Heart left ventricle (tissue), 16 donors: ENCODE measurements at regions of chr4 and their contacts with region 1.

Region 1: DNA sequence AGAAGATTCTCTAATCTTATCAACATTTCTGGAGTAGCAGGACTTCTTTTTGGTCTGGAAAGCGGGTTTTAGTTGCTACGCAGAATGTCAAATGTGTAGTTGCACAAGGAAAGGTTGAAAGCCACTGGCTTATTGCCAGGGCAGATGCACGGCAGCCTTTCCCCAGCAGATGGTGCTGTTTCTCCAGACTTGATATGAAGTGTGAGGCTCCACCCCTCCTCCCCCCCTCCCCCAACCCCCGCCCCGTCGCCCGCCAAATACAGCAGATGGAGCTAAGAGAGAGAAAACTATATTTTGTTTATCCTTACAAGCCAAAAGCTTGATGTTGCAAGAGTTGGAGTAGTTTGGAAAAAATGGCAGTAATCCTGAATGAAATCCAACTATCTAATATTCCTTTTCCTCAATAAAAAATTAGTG is 32.0 kb downstream of the ENOPH1 start:
- DNase-seq: peak; percentile 76 to 85 (median 80)
- ATAC-seq: peak; percentile 57 to 90 (median 86)
- H3K4me3 ChIP-seq: no peak overlapping the region
- H3K27ac ChIP-seq: peak overlapping the region in 1 of 12 donors; percentile 10
- H3K4me1 ChIP-seq: peaks cover 0 to 9% (median 1%) of the 10 kb centered on the region in 12 donors
- H3K27me3 ChIP-seq: no peaks in the 10 kb centered on the region
- CTCF ChIP-seq: peak; percentile 72 to 97 (median 89)
- POLR2A ChIP-seq: no peak

Region 2: DNA sequence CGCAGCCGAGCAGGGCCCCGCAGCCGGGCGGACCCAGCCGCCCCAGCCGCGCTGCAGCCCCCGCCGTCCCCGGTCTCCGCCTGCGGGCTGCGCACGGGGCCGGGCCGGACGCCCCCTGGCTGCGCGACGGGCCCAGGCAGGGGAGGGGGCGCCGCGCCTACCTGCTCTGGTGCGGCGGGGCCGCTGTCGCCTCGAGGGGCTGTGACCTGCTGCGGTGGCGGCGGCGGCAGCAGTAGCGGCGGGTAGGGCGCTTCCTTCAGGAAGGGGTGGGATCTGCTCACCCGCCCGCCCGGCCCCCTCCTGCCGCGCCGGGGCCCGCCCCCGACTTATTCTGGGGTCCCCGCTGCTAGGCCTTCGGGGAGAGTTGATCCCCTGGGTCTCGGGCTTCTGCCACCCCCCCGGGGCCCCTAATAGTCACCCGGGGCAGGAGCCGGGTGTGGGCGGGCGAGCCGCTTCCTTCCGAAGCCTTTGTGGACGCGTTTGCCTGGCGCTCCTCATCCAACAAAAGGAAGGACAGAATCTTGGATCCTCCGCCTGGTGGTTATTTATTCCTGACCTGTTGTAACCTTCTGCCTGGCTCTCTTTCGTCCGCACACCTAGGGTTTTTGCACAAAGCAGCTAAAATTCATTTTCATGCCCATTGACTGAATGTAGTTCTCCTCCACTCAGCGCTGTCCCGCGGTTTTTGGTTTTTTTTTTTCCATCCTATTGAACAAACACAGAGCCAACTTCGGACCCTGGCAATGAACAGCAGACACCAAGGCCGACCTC is 99.5 kb after region 1 on chr4 and contains the start of gene TMEM150C:
- intact Hi-C with region 1: loop called in 2 of 10 experiments (anchors 2 to 5 kb)
- DNase-seq: peak; percentile 49 to 70 (median 53)
- ATAC-seq: peak; percentile 44 to 88 (median 83)
- H3K4me3 ChIP-seq: peak within 1 kb of the TSS; percentile 56 to 83 (median 70)
- H3K27ac ChIP-seq: peak within 1 kb of the TSS in 10 of 12 donors; percentile 38 to 76 (median 66)
- H3K4me1 ChIP-seq: peaks cover 0 to 17% (median 6%) of the 10 kb centered on the region in 12 donors
- H3K27me3 ChIP-seq: peaks cover 0 to 26% (median 0%) of the 10 kb centered on the region in 9 donors
- CTCF ChIP-seq: peak in 8 of 12 donors; percentile 13 to 53 (median 36)
- POLR2A ChIP-seq: no peak
- total RNA-seq, gene TMEM150C: 8.8 to 22.9 (median 13.3) TPM

Region 3: GRCh38 chr4:82801910-82802521 is 339.6 kb after region 1 on chr4:
- intact Hi-C with region 1: loop called in 6 of 10 experiments (anchors 5 to 10 kb)
- DNase-seq: no peak
- ATAC-seq: no peak
- H3K4me3 ChIP-seq: no peak overlapping the region
- H3K27ac ChIP-seq: no peak overlapping the region
- H3K4me1 ChIP-seq: peaks cover 0 to 26% (median 9%) of the 10 kb centered on the region in 12 donors
- H3K27me3 ChIP-seq: peaks cover 0 to 25% (median 0%) of the 10 kb centered on the region in 9 donors
- CTCF ChIP-seq: peak in 7 of 12 donors; percentile 9 to 49 (median 29)
- POLR2A ChIP-seq: no peak

Region 4: DNA sequence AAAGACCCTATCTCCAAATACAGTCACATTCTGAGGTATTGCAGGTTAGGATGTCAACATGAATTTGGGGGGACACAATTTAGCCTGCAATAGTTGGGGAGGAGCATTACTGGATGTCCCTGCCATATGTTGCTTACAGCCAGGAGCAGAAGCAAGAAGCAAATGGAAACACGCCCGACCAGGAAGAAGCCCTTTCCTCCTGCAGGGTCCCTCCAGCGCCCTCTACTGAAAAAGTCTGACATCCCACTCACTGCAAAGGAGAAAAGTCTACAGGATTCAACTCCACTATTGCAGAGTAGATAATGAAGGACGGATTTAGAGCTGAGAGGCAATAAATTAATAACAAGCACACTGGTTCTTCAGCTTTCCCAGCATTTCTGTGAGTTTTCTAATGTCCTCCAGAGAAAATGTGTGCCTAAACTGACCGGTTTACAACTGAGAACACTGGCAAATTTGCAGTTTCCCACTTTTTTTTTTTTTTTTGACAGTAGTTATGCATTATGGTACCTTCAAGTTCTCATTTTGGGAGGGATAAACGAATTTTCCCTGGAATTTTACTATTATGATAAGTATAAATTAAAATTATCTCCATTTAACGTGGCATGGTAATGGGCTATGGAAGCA is 790.5 kb after region 1 on chr4:
- intact Hi-C with region 1: loop called in 1 of 10 experiments (anchors 10 kb)
- DNase-seq: peak in 4 of 5 donors; percentile 45 to 59 (median 49)
- ATAC-seq: peak in 3 of 4 donors; percentile 49 to 58 (median 53)
- H3K4me3 ChIP-seq: no peak overlapping the region
- H3K27ac ChIP-seq: no peak overlapping the region
- H3K4me1 ChIP-seq: peaks cover 0 to 30% (median 0%) of the 10 kb centered on the region in 12 donors
- H3K27me3 ChIP-seq: no peaks in the 10 kb centered on the region
- CTCF ChIP-seq: peak; percentile 24 to 72 (median 46)
- POLR2A ChIP-seq: no peak

Region 5: DNA sequence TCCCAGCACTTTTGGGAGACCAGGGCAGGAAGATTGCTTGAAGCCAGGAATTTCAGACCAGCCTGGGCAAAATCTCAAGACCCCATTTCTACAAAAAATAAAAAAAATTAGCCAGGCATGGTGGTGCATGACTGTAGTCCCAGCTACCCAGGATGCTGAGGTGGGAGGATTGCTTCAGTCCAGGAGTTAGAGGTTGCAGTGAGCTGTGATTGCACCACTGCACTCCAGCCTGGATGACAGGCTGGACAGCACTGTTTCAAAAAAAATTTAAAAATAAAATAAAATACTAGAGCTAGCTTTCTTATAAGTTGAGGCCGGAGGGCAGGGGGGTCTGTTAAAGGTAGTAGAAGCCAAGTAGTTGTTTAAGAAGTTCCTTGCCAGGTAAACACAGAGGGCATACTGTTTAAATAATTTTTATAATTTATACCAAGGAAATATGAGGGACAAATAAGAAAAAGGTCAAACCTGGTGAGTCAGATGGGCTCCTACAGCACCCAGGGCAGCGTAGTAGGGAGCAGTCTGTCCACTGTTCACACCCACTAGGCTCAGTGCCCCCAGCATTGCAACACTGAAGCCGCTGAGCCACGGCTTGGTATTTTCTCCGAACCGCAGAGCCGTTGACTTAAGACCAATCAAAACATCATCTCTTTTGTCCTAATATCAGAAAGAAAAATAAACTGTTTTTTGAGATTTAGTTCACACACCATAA is 804.9 kb after region 1 on chr4:
- intact Hi-C with region 1: loop called in 6 of 10 experiments (anchors 5 to 10 kb)
- DNase-seq: no peak
- ATAC-seq: no peak
- H3K4me3 ChIP-seq: no peak overlapping the region
- H3K27ac ChIP-seq: no peak overlapping the region
- H3K4me1 ChIP-seq: no peaks in the 10 kb centered on the region
- H3K27me3 ChIP-seq: no peaks in the 10 kb centered on the region
- CTCF ChIP-seq: no peak
- POLR2A ChIP-seq: no peak